Activated CD4-positive, alpha-beta memory T cell treated with anti-CD3 and anti-CD28 coated beads, Interleukin-2, amount 10 ng/mL, durations not matched to agents 7 days and 5 days (primary cell): ENCODE measurements at regions of chr6 and their contacts with region 1.

Region 1: DNA sequence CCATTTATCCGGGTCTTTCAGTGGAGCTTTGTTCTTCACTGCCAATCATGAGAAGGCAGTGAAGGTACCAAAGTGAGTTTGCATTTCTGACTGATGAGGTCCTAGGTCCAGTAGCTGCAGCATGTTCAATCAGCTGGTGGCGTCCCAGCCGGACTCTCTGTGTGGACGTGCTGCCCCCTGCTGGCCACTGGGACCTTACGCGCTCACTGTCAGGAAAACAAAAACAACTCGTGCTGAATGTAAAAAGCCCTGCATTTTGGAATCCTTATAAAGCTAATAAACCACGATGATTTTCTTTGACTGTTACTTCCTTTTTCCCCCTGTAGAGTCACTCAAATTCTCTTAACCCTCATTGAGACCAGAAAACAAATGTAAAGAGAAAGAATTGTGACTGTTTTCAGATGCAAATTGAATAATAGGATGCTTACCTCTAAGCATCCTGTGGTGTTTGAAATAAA is 4.9 kb upstream of the CD24 start:
- DNase-seq: peak; percentile 82
- H3K4me3 Mint-ChIP-seq: no peak overlapping the region
- H3K27ac Mint-ChIP-seq: no peak overlapping the region
- H3K4me1 Mint-ChIP-seq: peaks cover 8% of the 10 kb centered on the region
- H3K27me3 Mint-ChIP-seq: peaks cover 40% of the 10 kb centered on the region

Region 2: DNA sequence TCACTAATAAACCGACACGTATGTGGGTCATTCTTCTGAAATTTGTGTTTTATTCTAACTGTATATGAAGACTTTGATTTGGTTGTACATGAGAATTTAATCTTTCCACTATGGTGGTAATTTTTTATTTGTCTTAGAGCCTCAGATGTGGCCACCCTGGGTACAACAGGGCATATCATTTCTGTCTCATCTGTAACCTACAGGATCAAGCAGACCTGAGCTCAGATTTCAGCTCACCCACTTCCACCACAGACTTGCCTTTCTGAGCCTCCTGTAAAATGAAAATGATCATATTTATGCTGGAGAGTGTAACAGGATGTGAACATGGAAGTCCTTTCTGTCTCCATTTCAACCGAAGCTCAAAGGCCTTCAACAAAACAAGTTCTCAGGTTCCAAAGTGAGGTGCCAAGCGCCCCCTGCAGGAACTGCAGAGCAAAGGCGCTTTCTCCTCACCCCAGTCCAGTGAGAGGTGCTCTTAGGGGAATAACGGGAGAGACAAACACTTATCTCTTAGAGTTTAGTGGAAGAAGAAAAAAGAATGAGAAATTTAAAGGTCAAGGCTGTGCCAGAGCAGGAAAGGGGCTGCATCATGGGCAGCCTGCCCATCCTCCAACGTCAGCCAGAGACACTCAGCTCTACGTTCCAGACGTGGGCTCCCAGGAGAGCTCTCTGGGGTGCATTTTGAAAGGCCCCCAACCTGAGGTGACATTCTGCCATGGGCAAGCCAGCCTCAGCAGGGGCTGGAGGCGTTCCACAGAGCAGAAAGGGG is 18.1 kb after region 1 on chr6:
- CTCF ChIA-PET with region 1: interaction called, 11 read pairs
- POLR2A ChIA-PET with region 1: interaction called, 3 read pairs
- DNase-seq: peak; percentile 63
- H3K4me3 Mint-ChIP-seq: no peak overlapping the region
- H3K27ac Mint-ChIP-seq: no peak overlapping the region
- H3K4me1 Mint-ChIP-seq: peaks cover 4% of the 10 kb centered on the region
- H3K27me3 Mint-ChIP-seq: no peaks in the 10 kb centered on the region